ENCODE measurements at regions of chr4 and their contacts with region 1.

Region 1: DNA sequence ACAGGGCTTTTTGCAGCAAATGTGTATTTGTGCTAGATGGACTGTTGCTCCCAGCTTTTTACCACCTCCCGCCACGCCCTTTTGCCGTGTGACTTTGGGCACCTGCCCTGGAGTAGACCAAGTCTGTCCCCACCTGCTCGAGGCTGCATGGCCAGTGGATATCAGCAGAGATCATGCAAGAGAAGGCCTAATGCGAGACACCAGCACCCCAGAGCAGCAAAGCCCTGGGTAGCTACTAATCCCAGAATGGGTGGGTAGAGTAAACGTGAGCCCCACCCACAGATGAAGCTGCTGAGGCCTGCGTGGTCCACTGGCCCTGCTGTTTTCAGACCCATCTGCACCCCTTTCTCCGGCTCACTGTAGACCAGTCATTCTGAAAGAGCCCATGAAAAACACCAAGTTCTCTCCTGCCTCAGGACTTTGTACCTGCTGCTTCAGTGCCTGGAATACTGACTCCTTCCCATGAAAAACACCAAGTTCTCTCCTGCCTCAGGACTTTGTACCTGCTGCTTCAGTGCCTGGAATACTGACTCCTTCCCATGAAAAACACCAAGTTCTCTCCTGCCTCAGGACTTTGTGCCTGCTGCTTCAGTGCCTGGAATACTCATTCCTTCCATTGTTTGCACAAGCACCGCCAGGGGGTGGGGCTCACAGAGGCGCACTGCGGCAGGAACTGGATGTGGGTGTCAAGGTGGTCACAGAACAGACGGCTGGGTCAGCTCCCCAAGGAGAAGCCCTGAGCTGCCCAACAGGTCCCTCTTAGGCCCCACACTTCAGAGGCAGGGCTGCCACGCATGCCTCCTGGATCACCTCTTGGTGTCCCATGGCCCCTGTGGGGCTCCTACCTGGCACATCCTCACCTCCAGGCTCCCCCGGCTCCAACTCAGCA is 5.1 kb upstream of the TNIP2 start:
- DNase-seq: no peak
- ATAC-seq: no peak
- H3K4me3 ChIP-seq: no peak overlapping the region
- H3K4me3 Mint-ChIP-seq: no peak overlapping the region
- H3K27ac ChIP-seq: no peak overlapping the region
- H3K27ac Mint-ChIP-seq: no peak overlapping the region
- H3K4me1 ChIP-seq: peaks cover 8 to 28% of the 10 kb centered on the region in 2 donors
- H3K4me1 Mint-ChIP-seq: peaks cover 21% of the 10 kb centered on the region
- H3K27me3 ChIP-seq: no peaks in the 10 kb centered on the region
- H3K27me3 Mint-ChIP-seq: no peaks in the 10 kb centered on the region
- CTCF ChIP-seq: no peak

Region 2: GRCh38 chr4:2787230-2788088 is 26.2 kb after region 1 on chr4:
- CTCF ChIA-PET with region 1: interaction called, 6 read pairs
- POLR2A ChIA-PET with region 1: interaction called, 3 read pairs
- intact Hi-C with region 1: loop called (anchors 1 kb)
- DNase-seq: peak; percentile 90
- ATAC-seq: peak; percentile 52
- H3K4me3 ChIP-seq: peak overlapping the region in 2 of 5 experiments; percentile 10 to 20
- H3K4me3 Mint-ChIP-seq: peak overlapping the region; percentile 74
- H3K27ac ChIP-seq: peak overlapping the region; percentile 99
- H3K27ac Mint-ChIP-seq: peak overlapping the region; percentile 94
- H3K4me1 ChIP-seq: peaks cover 67 to 72% of the 10 kb centered on the region in 2 donors
- H3K4me1 Mint-ChIP-seq: peaks cover 70% of the 10 kb centered on the region
- H3K27me3 ChIP-seq: no peaks in the 10 kb centered on the region
- H3K27me3 Mint-ChIP-seq: no peaks in the 10 kb centered on the region
- CTCF ChIP-seq: no peak

Region 3: GRCh38 chr4:2837904-2838496 is 76.7 kb after region 1 on chr4:
- CTCF ChIA-PET with region 1: interaction called, 9 read pairs
- POLR2A ChIA-PET with region 1: no interaction called
- intact Hi-C with region 1: loop called (anchors 1 kb)
- DNase-seq: peak; percentile 81
- ATAC-seq: peak; percentile 58
- H3K4me3 ChIP-seq: peak overlapping the region in 4 of 5 experiments; percentile 18 to 51 (median 34)
- H3K4me3 Mint-ChIP-seq: peak overlapping the region; percentile 71
- H3K27ac ChIP-seq: peak overlapping the region; percentile 78
- H3K27ac Mint-ChIP-seq: peak overlapping the region; percentile 63
- H3K4me1 ChIP-seq: peaks cover 70 to 76% of the 10 kb centered on the region in 2 donors
- H3K4me1 Mint-ChIP-seq: peaks cover 72% of the 10 kb centered on the region
- H3K27me3 ChIP-seq: no peaks in the 10 kb centered on the region
- H3K27me3 Mint-ChIP-seq: no peaks in the 10 kb centered on the region
- CTCF ChIP-seq: no peak

Region 4: DNA sequence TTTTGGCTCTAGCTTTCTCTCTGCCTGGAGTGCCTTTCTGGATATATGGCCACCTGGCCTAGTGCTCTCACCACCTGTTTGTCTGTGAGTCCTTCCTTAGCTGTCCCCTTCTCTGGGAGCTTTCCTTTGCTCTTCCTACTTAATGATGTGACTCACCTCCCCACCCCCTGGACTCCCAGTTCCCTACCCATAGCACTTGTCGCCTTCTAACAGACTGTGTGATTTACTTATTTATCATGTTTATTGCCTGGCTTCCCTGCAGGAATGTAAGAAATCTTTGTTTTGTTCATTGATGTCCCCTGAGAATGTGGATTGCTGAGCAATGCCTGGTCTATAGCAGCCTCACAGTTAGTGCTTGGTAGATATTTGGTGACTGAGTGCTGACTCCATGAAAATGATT is 101.2 kb after region 1 on chr4:
- CTCF ChIA-PET with region 1: interaction called, 13 read pairs
- POLR2A ChIA-PET with region 1: no interaction called
- intact Hi-C with region 1: no loop called
- DNase-seq: no peak
- ATAC-seq: no peak
- H3K4me3 ChIP-seq: no peak overlapping the region
- H3K4me3 Mint-ChIP-seq: peak overlapping the region; percentile 0
- H3K27ac ChIP-seq: peak overlapping the region in 1 of 2 donors; percentile 76
- H3K27ac Mint-ChIP-seq: peak overlapping the region; percentile 38
- H3K4me1 ChIP-seq: peaks cover 85 to 91% of the 10 kb centered on the region in 2 donors
- H3K4me1 Mint-ChIP-seq: peaks cover 88% of the 10 kb centered on the region
- H3K27me3 ChIP-seq: no peaks in the 10 kb centered on the region
- H3K27me3 Mint-ChIP-seq: no peaks in the 10 kb centered on the region
- CTCF ChIP-seq: no peak

Region 5: DNA sequence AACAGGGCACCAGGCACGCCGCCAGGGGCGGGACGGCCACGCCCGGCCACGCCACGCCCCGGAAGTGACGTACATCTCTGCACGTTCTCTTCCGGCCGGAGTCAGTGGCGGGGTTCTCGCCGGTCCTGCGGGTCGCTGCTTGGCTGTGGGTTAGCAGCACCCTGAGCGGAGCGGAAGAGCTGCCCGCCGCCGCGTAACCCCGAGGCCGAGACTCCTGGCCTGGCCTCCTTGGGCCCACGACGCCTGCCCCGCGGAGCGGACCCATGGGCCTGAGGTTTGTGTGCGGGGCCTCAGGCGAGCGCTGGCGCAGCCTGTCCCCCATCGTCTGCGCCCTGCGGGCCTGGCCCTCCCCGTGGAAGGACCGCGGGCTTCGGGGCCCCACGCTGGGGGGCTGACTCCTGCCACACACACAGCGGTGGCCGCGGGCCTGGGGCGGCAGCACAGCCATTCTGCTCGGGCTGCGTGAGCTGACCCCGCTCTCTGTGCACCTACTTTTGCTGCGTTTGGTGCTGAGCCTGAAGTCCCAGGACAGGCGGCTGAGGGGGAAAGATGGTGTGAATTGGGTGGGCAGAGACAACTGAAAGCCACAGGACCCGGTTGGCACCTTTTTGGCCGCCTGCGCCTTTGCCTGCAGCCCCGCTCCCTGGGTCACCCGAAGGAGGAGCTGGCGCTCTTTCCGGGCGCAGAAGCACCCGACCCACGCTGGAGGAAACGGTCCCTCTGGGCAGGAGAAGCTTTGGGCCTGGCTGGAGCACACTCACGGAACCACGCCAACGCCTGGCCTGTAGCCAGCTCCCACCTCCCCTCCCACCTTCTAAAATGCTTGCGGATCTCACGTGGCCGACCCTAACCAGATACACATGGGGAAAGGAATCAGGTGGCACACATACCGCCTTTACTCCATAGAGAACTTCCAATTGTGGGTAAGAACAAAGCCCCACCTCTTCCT is 173.8 kb after region 1 on chr4:
- CTCF ChIA-PET with region 1: interaction called, 5 read pairs
- POLR2A ChIA-PET with region 1: interaction called, 4 read pairs
- intact Hi-C with region 1: loop called (anchors 1 kb)
- DNase-seq: peak; percentile 97
- ATAC-seq: peak; percentile 54
- H3K4me3 ChIP-seq: peak overlapping the region; percentile 8 to 96 (median 80)
- H3K4me3 Mint-ChIP-seq: peak overlapping the region; percentile 89
- H3K27ac ChIP-seq: peak overlapping the region; percentile 55 to 87
- H3K27ac Mint-ChIP-seq: peak overlapping the region; percentile 87
- H3K4me1 ChIP-seq: peaks cover 39 to 63% of the 10 kb centered on the region in 2 donors
- H3K4me1 Mint-ChIP-seq: peaks cover 55% of the 10 kb centered on the region
- H3K27me3 ChIP-seq: no peaks in the 10 kb centered on the region
- H3K27me3 Mint-ChIP-seq: no peaks in the 10 kb centered on the region
- CTCF ChIP-seq: no peak

Region 6: GRCh38 chr4:3037957-3038461 is 276.7 kb after region 1 on chr4:
- CTCF ChIA-PET with region 1: no interaction called
- POLR2A ChIA-PET with region 1: no interaction called
- intact Hi-C with region 1: loop called (anchors 1 kb)
- DNase-seq: peak; percentile 48
- ATAC-seq: no peak
- H3K4me3 ChIP-seq: peak overlapping the region in 4 of 5 experiments; percentile 14 to 60 (median 42)
- H3K4me3 Mint-ChIP-seq: peak overlapping the region; percentile 75
- H3K27ac ChIP-seq: peak overlapping the region in 1 of 2 donors; percentile 48
- H3K27ac Mint-ChIP-seq: peak overlapping the region; percentile 70
- H3K4me1 ChIP-seq: peaks cover 31 to 58% of the 10 kb centered on the region in 2 donors
- H3K4me1 Mint-ChIP-seq: peaks cover 48% of the 10 kb centered on the region
- H3K27me3 ChIP-seq: no peaks in the 10 kb centered on the region
- H3K27me3 Mint-ChIP-seq: no peaks in the 10 kb centered on the region
- CTCF ChIP-seq: no peak